WTC11 (cell line): ENCODE measurements at regions of chr7 and their contacts with region 1.

Region 1: DNA sequence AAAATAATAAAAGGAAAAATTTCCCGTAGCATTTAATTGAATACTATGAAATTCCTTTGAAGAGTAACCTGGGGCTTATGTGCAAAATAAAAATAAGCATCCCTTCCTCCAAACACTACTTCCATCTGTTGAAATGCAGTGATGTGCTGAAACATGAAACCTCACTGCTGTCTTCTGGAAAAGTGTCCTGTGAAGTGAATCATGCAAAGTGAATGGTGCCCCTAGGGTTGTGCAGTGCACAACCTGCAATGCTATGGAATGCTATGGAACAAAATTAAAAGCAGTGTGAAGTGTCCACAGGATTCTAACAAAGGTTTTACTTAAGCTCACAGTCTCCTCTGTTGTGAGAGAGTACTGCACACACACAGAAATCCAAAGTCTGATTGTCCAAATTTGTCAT is 480.9 kb downstream of the ETV1 start:
- DNase-seq: no peak
- ATAC-seq: no peak
- H3K4me3 Mint-ChIP-seq: no peak overlapping the region
- H3K27ac Mint-ChIP-seq: no peak overlapping the region
- H3K4me1 Mint-ChIP-seq: no peaks in the 10 kb centered on the region
- H3K27me3 Mint-ChIP-seq: no peaks in the 10 kb centered on the region
- CTCF ChIP-seq: no peak

Region 2: DNA sequence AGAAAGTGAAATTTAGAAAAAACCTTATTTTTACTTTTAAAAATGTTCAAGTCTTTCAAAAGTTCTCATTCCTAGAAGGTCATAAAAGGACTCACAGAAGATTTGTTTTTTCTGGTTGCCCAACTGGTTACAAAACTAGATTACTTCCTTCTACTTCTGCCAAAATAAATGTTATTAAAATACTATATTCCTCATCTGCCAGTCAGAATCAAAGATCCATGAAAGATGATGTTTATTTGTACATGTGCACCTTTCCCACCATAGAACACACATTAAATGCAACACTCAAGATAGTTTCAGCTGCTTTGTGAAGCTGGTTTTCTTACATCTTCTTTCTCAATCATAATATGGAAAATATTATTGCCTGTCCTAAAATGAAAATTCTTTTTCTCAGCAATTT is 15.5 kb after region 1 on chr7:
- CTCF ChIA-PET with region 1: no interaction called
- POLR2A ChIA-PET with region 1: no interaction called
- DNase-seq: no peak
- ATAC-seq: no peak
- H3K4me3 Mint-ChIP-seq: no peak overlapping the region
- H3K27ac Mint-ChIP-seq: no peak overlapping the region
- H3K4me1 Mint-ChIP-seq: peaks cover 3% of the 10 kb centered on the region
- H3K27me3 Mint-ChIP-seq: no peaks in the 10 kb centered on the region
- CTCF ChIP-seq: no peak

Region 3: DNA sequence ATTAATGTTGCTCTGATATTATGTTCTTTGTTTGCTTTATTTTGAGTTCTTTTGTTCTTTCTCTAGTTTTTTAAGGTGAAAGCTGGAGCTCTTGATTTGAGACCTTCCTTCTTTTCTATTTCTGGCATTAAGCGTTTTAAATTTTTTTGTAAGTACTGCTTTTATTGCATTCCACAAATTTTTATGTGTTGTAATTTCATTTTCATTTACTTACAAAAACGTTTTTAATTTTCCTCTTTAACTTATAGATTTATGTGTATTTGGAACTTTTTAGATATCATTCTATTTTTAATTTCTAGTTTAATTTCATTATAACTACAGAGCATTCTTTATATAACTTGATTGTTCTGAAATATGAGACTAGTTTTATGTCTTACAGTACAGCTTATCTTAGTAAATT is 85.3 kb after region 1 on chr7:
- CTCF ChIA-PET with region 1: no interaction called
- POLR2A ChIA-PET with region 1: no interaction called
- DNase-seq: no peak
- ATAC-seq: no peak
- H3K4me3 Mint-ChIP-seq: no peak overlapping the region
- H3K27ac Mint-ChIP-seq: no peak overlapping the region
- H3K4me1 Mint-ChIP-seq: no peaks in the 10 kb centered on the region
- H3K27me3 Mint-ChIP-seq: no peaks in the 10 kb centered on the region
- CTCF ChIP-seq: no peak

Region 4: DNA sequence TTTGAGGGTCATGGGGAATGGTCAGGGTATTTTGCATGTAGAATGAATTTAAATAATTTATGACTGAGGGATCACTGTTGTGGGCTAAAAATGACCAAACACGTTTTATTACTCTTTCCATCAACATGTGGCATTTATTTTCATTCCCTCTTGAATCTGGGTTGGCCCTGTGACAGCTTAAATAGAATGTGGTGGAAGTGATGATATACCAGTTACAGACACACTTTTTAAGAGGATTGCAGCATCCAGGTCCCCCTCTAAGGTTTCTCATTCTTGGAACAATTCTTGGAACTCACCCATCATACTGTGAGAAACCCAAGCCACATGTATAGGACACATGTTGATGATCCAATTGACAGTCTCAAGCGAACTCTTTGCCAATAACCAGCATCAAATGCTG is 208.4 kb after region 1 on chr7:
- CTCF ChIA-PET with region 1: no interaction called
- POLR2A ChIA-PET with region 1: interaction called, 11 read pairs
- DNase-seq: no peak
- ATAC-seq: no peak
- H3K4me3 Mint-ChIP-seq: no peak overlapping the region
- H3K27ac Mint-ChIP-seq: no peak overlapping the region
- H3K4me1 Mint-ChIP-seq: peaks cover 3% of the 10 kb centered on the region; the same call in 1 of the 2 replicates
- H3K27me3 Mint-ChIP-seq: no peaks in the 10 kb centered on the region
- CTCF ChIP-seq: no peak